Activated CD4-positive, alpha-beta T cell treated with anti-CD3 and anti-CD28 coated beads for 36 hours (primary cell): ENCODE measurements at regions of chr2 and their contacts with region 1.

Region 1: DNA sequence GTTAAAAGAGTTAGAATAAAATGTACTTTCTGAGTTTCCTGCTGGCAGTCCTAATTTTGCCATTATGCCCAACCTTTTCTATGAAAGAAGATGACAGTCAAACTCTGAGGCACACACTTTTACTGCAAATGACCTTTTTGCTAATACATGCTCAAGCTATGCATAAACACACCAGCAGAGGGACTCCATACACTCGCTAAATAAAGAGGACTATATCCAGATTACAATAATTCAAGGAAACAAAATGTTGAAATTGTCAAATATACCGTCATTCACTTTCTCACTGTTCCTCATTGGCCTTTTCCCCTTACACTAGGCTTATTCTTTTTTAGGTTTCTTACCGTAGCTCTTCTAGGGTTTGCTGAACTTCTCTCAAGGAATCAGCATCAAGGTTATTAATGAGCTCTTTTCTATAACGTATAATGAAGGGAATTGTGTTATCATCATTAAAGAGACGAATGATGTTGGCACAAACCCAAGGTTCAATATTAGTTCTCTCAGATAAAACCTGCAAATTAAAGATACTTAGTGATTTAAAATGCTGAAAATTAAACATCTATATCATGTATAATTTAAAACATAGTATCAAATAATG is 25.7 kb downstream of the SRBD1 start:
- DNase-seq: no peak
- ATAC-seq: no peak
- H3K4me3 Mint-ChIP-seq: no peak overlapping the region
- H3K27ac Mint-ChIP-seq: no peak overlapping the region
- H3K4me1 Mint-ChIP-seq: peaks cover 13% of the 10 kb centered on the region
- H3K27me3 Mint-ChIP-seq: no peaks in the 10 kb centered on the region

Region 2: GRCh38 chr2:45541450-45541849 is 43.9 kb before region 1 on chr2:
- CTCF ChIA-PET with region 1: no interaction called
- POLR2A ChIA-PET with region 1: no interaction called
- intact Hi-C with region 1: no loop called
- DNase-seq: no peak
- ATAC-seq: no peak
- H3K4me3 Mint-ChIP-seq: no peak overlapping the region
- H3K27ac Mint-ChIP-seq: no peak overlapping the region
- H3K4me1 Mint-ChIP-seq: no peaks in the 10 kb centered on the region
- H3K27me3 Mint-ChIP-seq: no peaks in the 10 kb centered on the region

Region 3: DNA sequence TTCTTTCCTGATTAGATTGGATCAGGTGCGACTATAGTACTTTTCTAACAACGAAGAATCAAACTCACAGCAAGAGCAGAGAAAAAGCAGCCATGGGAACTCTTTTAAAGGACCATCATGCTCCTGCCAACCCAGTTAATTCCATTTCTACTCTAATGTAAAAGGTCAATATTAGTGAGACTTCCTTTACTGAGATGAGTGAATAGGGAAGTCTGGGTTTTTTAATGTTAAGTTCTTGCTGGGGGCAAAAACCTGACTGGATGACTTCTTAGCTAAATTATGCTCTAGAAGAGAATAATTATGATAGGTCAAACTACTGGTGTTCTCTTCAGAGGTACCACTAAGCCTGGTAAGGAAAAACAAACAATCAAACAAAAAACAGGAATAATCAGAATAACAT is 17.3 kb after region 1 on chr2:
- CTCF ChIA-PET with region 1: interaction called, 3 read pairs
- POLR2A ChIA-PET with region 1: interaction called, 4 read pairs
- intact Hi-C with region 1: loop called in 1 of 2 experiments (anchors 2 kb)
- DNase-seq: no peak
- ATAC-seq: no peak
- H3K4me3 Mint-ChIP-seq: no peak overlapping the region
- H3K27ac Mint-ChIP-seq: no peak overlapping the region
- H3K4me1 Mint-ChIP-seq: no peaks in the 10 kb centered on the region
- H3K27me3 Mint-ChIP-seq: no peaks in the 10 kb centered on the region